Left cardiac atrium (tissue), 4 donors: ENCODE measurements at regions of chr20 and their contacts with region 1.

Region 1: DNA sequence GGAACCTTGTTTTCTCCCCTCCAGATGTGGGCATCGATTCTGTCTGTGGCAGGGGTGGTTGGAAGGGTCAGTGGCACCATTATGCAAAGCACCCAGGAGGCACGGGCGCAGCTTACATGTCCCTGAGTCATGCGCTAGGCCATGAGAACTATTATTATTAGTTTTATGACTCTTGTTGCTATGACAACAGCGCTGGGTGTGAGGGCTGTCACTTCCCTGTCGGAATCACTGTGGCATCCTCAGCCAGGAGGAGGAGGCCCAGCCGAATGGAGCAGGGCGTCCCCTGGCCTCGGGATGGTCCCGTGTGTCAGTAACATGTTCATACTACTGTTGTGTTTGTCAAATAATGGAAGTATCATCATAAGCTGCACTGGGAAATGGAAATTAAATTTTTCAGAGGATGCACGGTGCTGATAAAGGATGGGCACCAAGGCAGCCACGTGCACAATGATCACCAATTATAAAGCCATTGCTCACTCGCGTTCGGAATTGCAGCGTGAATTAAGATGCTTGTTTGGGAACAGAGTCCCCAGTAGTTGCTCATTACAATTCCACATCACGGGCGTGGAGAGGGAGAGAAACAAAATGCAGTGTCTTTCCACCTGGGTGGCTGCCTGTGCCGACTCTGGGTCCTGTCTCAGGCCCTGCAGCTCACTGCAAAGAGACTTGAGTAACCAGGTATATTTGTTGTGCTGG is 247.9 kb downstream of the CDH4 start:
- DNase-seq: no peak
- ATAC-seq: no peak

Region 2: DNA sequence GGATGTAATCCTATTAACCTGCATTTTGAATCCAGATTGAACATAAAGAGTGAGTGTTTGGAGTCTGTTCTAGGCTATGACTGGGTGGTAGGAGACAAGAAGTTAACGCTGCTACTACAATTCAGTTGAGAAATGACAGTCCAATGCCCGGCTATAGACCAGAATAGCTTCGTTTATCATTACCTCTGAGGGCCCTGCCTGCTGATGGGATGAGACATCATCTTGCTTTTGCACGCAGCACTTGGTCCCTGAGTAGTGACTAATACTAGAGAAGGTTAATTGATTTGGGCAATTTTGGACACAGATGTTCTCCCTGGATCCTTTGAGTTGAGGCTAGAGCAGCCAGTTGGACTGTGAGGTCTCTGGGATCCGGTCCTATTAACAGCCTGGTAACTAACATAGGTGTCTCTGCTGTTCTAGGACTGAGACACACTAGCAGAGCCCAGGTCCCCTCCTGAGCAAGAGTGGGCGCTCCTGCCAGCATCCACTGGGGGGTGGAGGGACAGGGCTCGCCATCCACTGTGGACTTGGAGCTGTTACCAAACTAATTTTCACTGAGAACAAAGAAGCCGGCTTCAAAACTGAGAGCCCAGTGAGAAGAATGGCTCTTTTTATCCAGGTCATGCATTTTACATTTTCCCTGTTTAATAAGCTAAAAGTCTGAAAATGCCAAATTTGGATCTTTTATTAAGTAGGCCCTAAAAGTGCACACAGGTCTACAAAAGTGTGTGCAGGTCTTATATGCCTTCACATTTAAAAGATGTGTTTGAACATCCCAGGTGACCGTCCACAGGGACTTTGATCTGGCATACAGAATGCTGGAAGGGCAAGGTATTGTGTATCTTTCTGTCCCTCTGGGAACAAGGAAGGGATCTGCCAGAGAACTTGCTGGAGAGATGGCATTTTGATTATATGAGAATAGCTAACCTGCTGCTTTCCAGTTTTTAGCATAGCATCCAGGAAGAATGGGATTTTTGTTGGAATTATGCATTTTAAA is 35.4 kb before region 1 on chr20:
- intact Hi-C with region 1: no loop called
- DNase-seq: no peak
- ATAC-seq: no peak

Region 3: GRCh38 chr20:61556116-61556515 is 56.1 kb after region 1 on chr20:
- intact Hi-C with region 1: loop called in 1 of 2 experiments (anchors 10 kb)
- DNase-seq: no peak
- ATAC-seq: no peak